ENCODE measurements at regions of chr2 and their contacts with region 1.

Region 1: GRCh38 chr2:171146633-171147032 is 14.1 kb downstream of the TLK1 start:
- DNase-seq: no peak
- H3K4me3 ChIP-seq: no peak overlapping the region
- H3K27ac ChIP-seq: no peak overlapping the region
- H3K4me1 ChIP-seq: peaks cover 0 to 7% (median 4%) of the 10 kb centered on the region in 4 experiments; a peak in 3 of 7 replicates
- H3K27me3 ChIP-seq: no peaks in the 10 kb centered on the region
- CTCF ChIP-seq: no peak
- EP300 ChIP-seq: no peak
- POLR2A ChIP-seq: no peak
- RAD21 ChIP-seq: no peak

Region 2: DNA sequence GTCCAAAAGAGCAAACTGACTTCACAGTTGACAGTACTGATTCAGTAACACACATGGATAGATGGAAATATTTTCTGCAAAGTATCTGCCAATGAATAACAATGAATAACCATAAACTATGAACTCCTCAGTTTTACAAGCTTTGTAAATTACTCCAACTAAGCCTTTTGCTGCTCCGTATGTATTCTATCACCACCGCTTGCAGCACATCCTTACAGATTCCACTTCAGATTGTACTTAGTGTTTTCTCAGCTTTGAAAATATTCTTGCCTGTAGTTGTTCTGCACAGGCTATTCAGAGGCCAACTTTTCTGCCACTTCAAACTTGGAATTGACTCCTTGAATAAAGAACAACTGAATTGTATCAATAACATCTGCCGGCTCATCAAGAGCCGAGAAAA is 22.1 kb before region 1 on chr2:
- CTCF ChIA-PET with region 1: no interaction called
- POLR2A ChIA-PET with region 1: no interaction called
- DNase-seq: no peak
- H3K4me3 ChIP-seq: no peak overlapping the region
- H3K27ac ChIP-seq: no peak overlapping the region
- H3K4me1 ChIP-seq: no peaks in the 10 kb centered on the region
- H3K27me3 ChIP-seq: no peaks in the 10 kb centered on the region
- CTCF ChIP-seq: no peak
- EP300 ChIP-seq: no peak
- POLR2A ChIP-seq: no peak
- RAD21 ChIP-seq: no peak

Region 3: DNA sequence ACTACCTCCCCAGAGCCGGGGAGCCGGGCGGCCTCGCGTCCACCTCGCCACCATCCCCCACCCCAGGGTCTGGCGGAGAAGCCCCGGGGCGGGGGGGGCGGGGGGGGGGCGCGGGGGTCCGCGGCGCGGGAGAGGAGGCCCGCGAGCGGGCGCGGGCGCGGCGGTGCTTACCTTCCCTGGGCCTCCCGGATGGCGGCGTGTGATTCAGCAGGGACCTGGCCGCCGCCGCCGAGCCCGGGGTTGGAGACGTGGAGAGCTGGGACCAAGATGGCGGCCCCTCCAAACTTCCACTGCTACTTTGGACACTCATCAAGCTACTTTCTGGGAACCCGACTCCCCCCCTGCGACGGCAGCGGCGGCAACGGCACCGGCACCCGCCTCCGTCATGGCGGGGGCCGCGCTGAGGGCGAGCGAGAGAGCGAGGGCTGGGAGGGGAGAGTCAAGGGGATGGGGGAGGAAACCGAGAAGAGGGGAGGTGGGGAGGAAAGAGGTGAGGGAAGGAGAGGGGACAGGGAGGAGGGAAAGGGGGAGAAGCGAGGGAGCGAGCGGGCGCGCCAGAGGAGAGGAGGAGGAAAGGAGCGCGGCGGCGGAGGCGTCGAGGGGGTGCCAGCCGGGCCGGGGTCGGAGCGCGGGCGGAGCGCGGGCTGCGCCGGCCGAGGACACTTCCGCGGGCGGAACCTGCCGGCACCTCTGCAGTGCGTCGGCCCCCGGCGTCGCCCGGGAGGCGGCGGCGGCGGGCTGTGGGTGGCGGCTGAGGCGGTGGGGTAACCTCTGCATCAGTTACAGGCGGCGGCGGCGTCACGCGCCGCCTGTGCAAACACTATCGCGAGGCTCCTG is 13.7 kb after region 1 on chr2 and contains the start of gene TLK1:
- CTCF ChIA-PET with region 1: interaction called, 7 read pairs
- POLR2A ChIA-PET with region 1: interaction called, 19 read pairs
- DNase-seq: peak in 1 of 2 experiments; percentile 84
- H3K4me3 ChIP-seq: peak within 1 kb of the TSS; percentile 87 to 100 (median 92)
- H3K27ac ChIP-seq: peak within 1 kb of the TSS; percentile 92
- H3K4me1 ChIP-seq: peaks cover 0 to 3% (median 0%) of the 10 kb centered on the region in 4 experiments; a peak in 3 of 7 replicates
- H3K27me3 ChIP-seq: no peaks in the 10 kb centered on the region
- CTCF ChIP-seq: no peak
- EP300 ChIP-seq: 0 out of 3 replicates have a peak, but pooled peaks of 1 of the 2 experiments have one; percentile 3
- POLR2A ChIP-seq: peak in 1 of 2 experiments; percentile 68; a peak in 2 of 3 replicates
- RAD21 ChIP-seq: peak in 1 of 2 experiments; percentile 45; a peak in 2 of 4 replicates
- total RNA-seq, gene TLK1: 97.4 and 102 TPM in 2 replicates